CD8-positive, alpha-beta T cell (primary cell): ENCODE measurements at regions of chr5 and their contacts with region 1.

Region 1: GRCh38 chr5:55102348-55102747 is at the start of gene GZMA:
- DNase-seq: peak in 7 of 9 experiments; percentile 12 to 83 (median 56)
- ATAC-seq: peak; percentile 72
- H3K4me3 ChIP-seq: peak within 1 kb of the TSS; percentile 41 to 78
- H3K4me3 Mint-ChIP-seq: peak within 1 kb of the TSS; percentile 80
- H3K27ac ChIP-seq: peak within 1 kb of the TSS; percentile 39 to 70
- H3K27ac Mint-ChIP-seq: peak within 1 kb of the TSS; percentile 86
- H3K4me1 ChIP-seq: peaks cover 55% of the 10 kb centered on the region
- H3K4me1 Mint-ChIP-seq: peaks cover 87% of the 10 kb centered on the region
- H3K27me3 ChIP-seq: no peaks in the 10 kb centered on the region
- H3K27me3 Mint-ChIP-seq: no peaks in the 10 kb centered on the region
- CTCF ChIP-seq: no peak
- total RNA-seq, gene GZMA: 13.4 to 13.6 TPM

Region 2: DNA sequence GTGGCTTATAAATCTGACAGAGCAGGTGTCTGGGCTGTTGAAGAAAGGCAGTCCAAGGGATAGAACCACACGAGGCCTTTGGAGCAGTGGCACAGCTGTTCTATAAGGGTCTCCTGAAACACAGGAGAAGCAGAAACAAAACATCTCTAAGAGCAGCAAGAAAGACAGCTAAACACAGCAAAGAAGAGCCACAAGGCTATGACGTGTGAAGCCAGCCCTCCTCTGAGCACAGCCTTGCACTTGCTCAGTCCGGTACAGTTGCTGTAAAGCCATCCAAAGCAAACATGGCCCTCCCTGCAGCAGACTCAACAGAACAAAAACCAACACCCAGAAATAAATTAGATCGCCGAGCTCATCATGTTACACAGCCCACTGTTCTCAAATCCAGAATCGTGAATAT is 80.9 kb before region 1 on chr5:
- CTCF ChIA-PET with region 1: interaction called, 10 read pairs
- POLR2A ChIA-PET with region 1: interaction called, 8 read pairs
- intact Hi-C with region 1: loop called in 1 of 2 experiments (anchors 5 kb)
- DNase-seq: peak in 2 of 9 experiments; percentile 48 to 60
- ATAC-seq: peak; percentile 34
- H3K4me3 ChIP-seq: peak overlapping the region in 1 of 2 experiments; percentile 20
- H3K4me3 Mint-ChIP-seq: peak overlapping the region; percentile 35
- H3K27ac ChIP-seq: peak overlapping the region in 1 of 2 experiments; percentile 55
- H3K27ac Mint-ChIP-seq: peak overlapping the region; percentile 68
- H3K4me1 ChIP-seq: peaks cover 23% of the 10 kb centered on the region
- H3K4me1 Mint-ChIP-seq: peaks cover 47% of the 10 kb centered on the region
- H3K27me3 ChIP-seq: no peaks in the 10 kb centered on the region
- H3K27me3 Mint-ChIP-seq: no peaks in the 10 kb centered on the region
- CTCF ChIP-seq: no peak

Region 3: GRCh38 chr5:55062039-55062779 is 40.1 kb before region 1 on chr5:
- CTCF ChIA-PET with region 1: interaction called, 3 read pairs
- POLR2A ChIA-PET with region 1: interaction called, 14 read pairs
- intact Hi-C with region 1: loop called (anchors 1 to 5 kb)
- DNase-seq: peak in 8 of 9 experiments; percentile 16 to 76 (median 49)
- ATAC-seq: peak; percentile 76
- H3K4me3 ChIP-seq: peak overlapping the region; percentile 30 to 44
- H3K4me3 Mint-ChIP-seq: peak overlapping the region; percentile 81
- H3K27ac ChIP-seq: peak overlapping the region; percentile 19 to 66
- H3K27ac Mint-ChIP-seq: peak overlapping the region; percentile 85
- H3K4me1 ChIP-seq: peaks cover 45% of the 10 kb centered on the region
- H3K4me1 Mint-ChIP-seq: peaks cover 57% of the 10 kb centered on the region
- H3K27me3 ChIP-seq: no peaks in the 10 kb centered on the region
- H3K27me3 Mint-ChIP-seq: no peaks in the 10 kb centered on the region
- CTCF ChIP-seq: no peak

Region 4: DNA sequence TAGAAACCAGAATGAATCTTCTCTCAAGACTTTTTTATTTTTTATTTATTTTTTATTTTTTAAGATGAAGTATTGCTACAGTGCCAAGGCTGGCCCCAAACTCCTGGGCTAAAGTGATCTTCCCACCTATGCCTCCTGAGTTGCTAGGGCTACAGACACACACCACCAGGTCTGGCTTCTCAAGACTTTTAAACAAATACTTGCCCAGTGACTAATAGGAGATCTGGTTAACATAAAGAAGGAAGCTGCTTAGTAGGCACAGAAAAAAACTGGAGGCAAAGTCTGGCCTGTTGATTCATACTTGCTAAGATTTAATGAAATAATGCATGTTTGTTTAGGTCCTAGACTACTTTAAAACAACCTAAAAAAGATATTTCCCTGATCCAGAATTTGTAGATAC is 566.0 kb after region 1 on chr5:
- CTCF ChIA-PET with region 1: no interaction called
- POLR2A ChIA-PET with region 1: no interaction called
- intact Hi-C with region 1: no loop called
- DNase-seq: no peak
- ATAC-seq: no peak
- H3K4me3 ChIP-seq: no peak overlapping the region
- H3K4me3 Mint-ChIP-seq: no peak overlapping the region
- H3K27ac ChIP-seq: no peak overlapping the region
- H3K27ac Mint-ChIP-seq: no peak overlapping the region
- H3K4me1 ChIP-seq: no peaks in the 10 kb centered on the region
- H3K4me1 Mint-ChIP-seq: no peaks in the 10 kb centered on the region
- H3K27me3 ChIP-seq: no peaks in the 10 kb centered on the region
- H3K27me3 Mint-ChIP-seq: no peaks in the 10 kb centered on the region
- CTCF ChIP-seq: no peak